B cell (primary cell): ENCODE measurements at regions of chr3 and their contacts with region 1.

Region 1: GRCh38 chr3:197511130-197511529 is 44.6 kb downstream of the BDH1 start:
- DNase-seq: no peak
- ATAC-seq: no peak
- H3K4me3 ChIP-seq: no peak overlapping the region
- H3K4me3 Mint-ChIP-seq: no peak overlapping the region
- H3K27ac ChIP-seq: no peak overlapping the region
- H3K27ac Mint-ChIP-seq: no peak overlapping the region
- H3K4me1 ChIP-seq: peaks cover 4 to 8% of the 10 kb centered on the region in 2 donors
- H3K4me1 Mint-ChIP-seq: peaks cover 4% of the 10 kb centered on the region
- H3K27me3 ChIP-seq: peaks cover 0 to 6% (median 3%) of the 10 kb centered on the region in 4 experiments
- H3K27me3 Mint-ChIP-seq: no peaks in the 10 kb centered on the region
- CTCF ChIP-seq: no peak

Region 2: GRCh38 chr3:197224034-197224444 is 287.1 kb before region 1 on chr3:
- CTCF ChIA-PET with region 1: interaction called, 13 read pairs
- POLR2A ChIA-PET with region 1: no interaction called
- intact Hi-C with region 1: loop called (anchors 1 kb)
- DNase-seq: peak; percentile 50
- ATAC-seq: no peak
- H3K4me3 ChIP-seq: no peak overlapping the region
- H3K4me3 Mint-ChIP-seq: no peak overlapping the region
- H3K27ac ChIP-seq: no peak overlapping the region
- H3K27ac Mint-ChIP-seq: no peak overlapping the region
- H3K4me1 ChIP-seq: no peaks in the 10 kb centered on the region
- H3K4me1 Mint-ChIP-seq: peaks cover 28% of the 10 kb centered on the region
- H3K27me3 ChIP-seq: no peaks in the 10 kb centered on the region
- H3K27me3 Mint-ChIP-seq: no peaks in the 10 kb centered on the region
- CTCF ChIP-seq: peak; percentile 68

Region 3: DNA sequence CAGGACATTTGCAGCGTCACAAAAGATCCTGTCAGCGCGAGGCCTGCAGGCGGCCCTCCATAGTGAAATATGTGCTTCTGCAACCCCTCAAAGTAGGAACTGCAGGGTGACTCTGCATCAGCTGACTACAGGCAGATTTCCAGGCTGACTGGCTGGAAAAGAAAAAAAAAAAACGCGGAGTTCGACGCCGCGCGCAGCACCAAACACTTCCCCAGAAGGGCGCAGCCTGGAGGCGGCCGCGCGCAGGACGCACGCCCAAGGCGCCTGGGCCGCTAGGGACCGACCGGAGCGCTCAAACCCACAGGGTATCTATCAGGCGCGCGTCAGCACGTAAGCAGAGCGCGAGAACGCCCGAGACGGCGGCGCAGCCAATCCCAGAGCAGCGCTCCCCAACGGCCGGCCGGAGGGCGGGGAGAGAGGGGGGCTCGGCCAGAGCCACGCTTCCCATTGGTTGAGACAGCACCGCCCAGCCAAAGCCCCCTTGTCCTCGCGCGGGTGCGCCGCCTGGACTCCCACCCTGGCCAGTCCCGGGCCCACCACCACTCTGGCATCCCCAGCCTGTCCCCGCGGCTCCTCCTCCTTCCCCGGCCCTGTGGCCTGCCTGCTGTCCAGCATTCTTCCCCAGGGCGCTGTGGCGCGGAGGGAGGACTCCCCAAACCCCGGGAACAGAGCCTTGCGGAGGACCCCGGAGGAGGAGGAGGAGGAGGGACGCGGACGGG is 43.6 kb after region 1 on chr3:
- CTCF ChIA-PET with region 1: no interaction called
- POLR2A ChIA-PET with region 1: no interaction called
- intact Hi-C with region 1: loop called (anchors 2 kb)
- DNase-seq: peak; percentile 95
- ATAC-seq: peak; percentile 93
- H3K4me3 ChIP-seq: peak overlapping the region; percentile 55 to 93 (median 76)
- H3K4me3 Mint-ChIP-seq: peak overlapping the region; percentile 94
- H3K27ac ChIP-seq: peak overlapping the region; percentile 80 to 92
- H3K27ac Mint-ChIP-seq: peak overlapping the region; percentile 90
- H3K4me1 ChIP-seq: peaks cover 6 to 13% of the 10 kb centered on the region in 2 donors
- H3K4me1 Mint-ChIP-seq: peaks cover 9% of the 10 kb centered on the region
- H3K27me3 ChIP-seq: peaks cover 0 to 2% (median 0%) of the 10 kb centered on the region in 4 experiments
- H3K27me3 Mint-ChIP-seq: peaks cover 7% of the 10 kb centered on the region
- CTCF ChIP-seq: peak; percentile 61